ENCODE measurements at regions of chr17 and their contacts with region 1.

Region 1: DNA sequence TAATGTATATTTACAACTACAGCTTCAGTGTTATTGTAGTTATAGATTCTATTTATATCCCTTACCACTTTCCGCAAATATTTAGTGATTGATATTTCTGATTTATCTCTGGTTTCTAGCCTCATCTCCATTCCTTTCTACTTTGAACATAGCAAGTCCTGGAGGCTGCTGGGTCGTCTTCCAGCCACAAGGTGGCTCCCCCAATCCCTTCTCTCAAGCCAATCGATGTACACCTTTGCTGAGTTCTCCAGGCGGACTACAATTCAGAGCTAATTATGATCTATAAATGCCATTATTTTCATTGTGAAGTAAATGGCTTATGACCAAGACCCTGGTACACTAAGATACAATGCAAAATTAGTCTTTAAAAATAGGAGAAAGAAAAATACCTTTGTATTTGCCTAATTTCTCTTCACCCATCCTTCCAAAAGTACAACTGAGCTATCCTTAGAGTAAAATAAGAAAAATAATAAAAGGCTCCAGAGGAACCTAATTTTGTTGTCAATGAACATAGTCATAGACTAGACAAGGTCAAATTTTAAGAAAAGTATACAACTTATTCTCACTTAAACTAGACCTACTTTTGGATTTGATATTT is 122.1 kb downstream of the SKAP1 start:
- DNase-seq: peak; percentile 70
- H3K4me3 ChIP-seq: no peak overlapping the region
- H3K27ac ChIP-seq: no peak overlapping the region
- H3K4me1 ChIP-seq: no peaks in the 10 kb centered on the region
- CTCF ChIP-seq: peak; percentile 98

Region 2: DNA sequence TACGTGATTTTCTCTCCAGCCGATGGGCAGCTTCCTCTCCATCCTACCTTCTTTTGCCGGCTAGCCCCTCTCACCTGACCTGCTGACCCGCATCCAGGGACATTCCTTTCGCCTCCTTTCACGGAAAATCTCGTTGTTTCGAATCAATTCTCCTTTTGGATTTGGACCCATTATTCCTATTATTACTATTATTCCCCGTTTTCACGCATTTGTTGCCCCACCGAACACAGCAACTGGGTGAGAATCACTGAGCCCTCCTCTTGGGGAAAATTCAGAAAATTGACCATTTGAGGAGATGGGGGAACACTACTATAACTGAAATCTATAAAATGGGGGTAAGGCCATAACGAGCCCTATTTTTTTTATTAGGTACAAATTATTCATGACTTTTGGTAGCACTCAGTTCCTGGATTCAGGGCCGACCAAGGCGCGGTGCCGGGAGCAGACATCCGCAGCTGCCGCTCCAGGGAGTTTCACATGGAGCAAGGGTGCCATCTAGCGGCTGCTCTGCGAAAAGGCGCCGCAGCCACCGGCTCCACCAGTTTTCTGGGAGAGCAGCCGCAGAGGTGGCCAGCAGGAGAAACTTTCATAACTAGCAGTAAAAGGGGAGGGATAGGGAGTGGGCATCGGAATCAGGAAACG is 310.5 kb after region 1 on chr17:
- CTCF ChIA-PET with region 1: no interaction called
- POLR2A ChIA-PET with region 1: no interaction called
- intact Hi-C with region 1: loop called (anchors 1 kb)
- DNase-seq: peak; percentile 76
- H3K4me3 ChIP-seq: no peak overlapping the region
- H3K27ac ChIP-seq: no peak overlapping the region
- H3K4me1 ChIP-seq: no peaks in the 10 kb centered on the region
- CTCF ChIP-seq: peak; percentile 99

Measured in OCI-LY7 (cell line).